CD8-positive, alpha-beta T cell (primary cell): ENCODE measurements at regions of chr4 and their contacts with region 1.

Region 1: DNA sequence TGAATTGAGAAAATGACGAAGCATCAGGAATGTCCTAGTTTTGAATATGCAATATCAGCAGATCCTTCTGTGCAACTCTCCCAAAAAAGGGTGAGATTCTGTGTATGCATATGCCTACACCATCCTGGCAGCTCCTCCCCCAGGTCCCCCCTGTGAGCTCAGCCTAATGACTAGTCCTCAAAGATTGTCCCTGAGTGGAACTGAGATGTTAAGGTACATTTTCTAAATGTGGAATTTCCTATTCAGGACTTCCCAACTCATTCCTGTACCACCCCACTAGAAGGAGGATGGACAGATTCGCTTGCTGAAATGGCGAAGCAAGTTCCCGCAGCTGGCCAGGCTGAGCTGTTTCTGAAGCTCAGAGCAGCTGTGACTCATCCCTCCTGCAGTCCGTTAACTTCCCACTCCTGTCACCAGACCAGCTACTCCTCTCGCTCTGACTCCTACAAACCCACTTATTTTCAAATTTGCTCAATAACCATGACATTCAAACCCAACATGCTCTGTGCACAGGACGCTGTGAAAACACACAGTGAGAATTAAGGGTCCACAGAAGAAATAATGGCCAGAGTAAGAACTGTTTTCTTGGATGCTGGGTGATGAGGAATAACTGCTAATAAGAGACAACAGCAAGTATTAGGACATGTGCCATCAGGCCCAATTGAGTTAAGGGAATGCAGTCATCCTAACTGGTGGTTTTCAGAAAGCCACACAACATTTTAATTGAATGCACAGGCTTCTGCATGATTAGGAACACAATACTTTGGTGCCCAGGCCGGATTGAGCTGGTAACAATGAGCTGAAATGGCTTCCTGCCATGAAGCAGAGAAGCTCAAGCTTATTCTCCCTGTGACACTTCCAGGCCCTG is 40.0 kb upstream of the IRF2 start:
- DNase-seq: peak in 3 of 9 experiments; percentile 8 to 44 (median 22)
- ATAC-seq: no peak
- H3K4me3 ChIP-seq: no peak overlapping the region
- H3K4me3 Mint-ChIP-seq: peak overlapping the region; percentile 30
- H3K27ac ChIP-seq: peak overlapping the region in 1 of 2 experiments; percentile 27
- H3K27ac Mint-ChIP-seq: peak overlapping the region; percentile 6
- H3K4me1 ChIP-seq: no peaks in the 10 kb centered on the region
- H3K4me1 Mint-ChIP-seq: peaks cover 10% of the 10 kb centered on the region
- H3K27me3 ChIP-seq: no peaks in the 10 kb centered on the region
- H3K27me3 Mint-ChIP-seq: no peaks in the 10 kb centered on the region
- CTCF ChIP-seq: no peak

Region 2: GRCh38 chr4:184529283-184529682 is 14.9 kb after region 1 on chr4:
- CTCF ChIA-PET with region 1: interaction called, 5 read pairs
- POLR2A ChIA-PET with region 1: interaction called, 3 read pairs
- intact Hi-C with region 1: loop called in 1 of 2 experiments (anchors 2 kb)
- DNase-seq: no peak
- ATAC-seq: no peak
- H3K4me3 ChIP-seq: no peak overlapping the region
- H3K4me3 Mint-ChIP-seq: no peak overlapping the region
- H3K27ac ChIP-seq: no peak overlapping the region
- H3K27ac Mint-ChIP-seq: no peak overlapping the region
- H3K4me1 ChIP-seq: peaks cover 13% of the 10 kb centered on the region
- H3K4me1 Mint-ChIP-seq: peaks cover 37% of the 10 kb centered on the region
- H3K27me3 ChIP-seq: no peaks in the 10 kb centered on the region
- H3K27me3 Mint-ChIP-seq: no peaks in the 10 kb centered on the region
- CTCF ChIP-seq: no peak